Natural killer cell (primary cell): ENCODE measurements at regions of chr17 and their contacts with region 1.

Region 1: GRCh38 chr17:68179926-68180285 is 67.9 kb upstream of the AMZ2 start:
- DNase-seq: no peak
- ATAC-seq: no peak
- H3K4me3 ChIP-seq: no peak overlapping the region
- H3K4me3 Mint-ChIP-seq: no peak overlapping the region
- H3K27ac ChIP-seq: peak overlapping the region; percentile 75
- H3K27ac Mint-ChIP-seq: peak overlapping the region; percentile 95 to 97
- H3K4me1 ChIP-seq: peaks cover 56% of the 10 kb centered on the region
- H3K4me1 Mint-ChIP-seq: peaks cover 28 to 44% of the 10 kb centered on the region in 2 donors
- H3K27me3 ChIP-seq: no peaks in the 10 kb centered on the region
- H3K27me3 Mint-ChIP-seq: no peaks in the 10 kb centered on the region
- CTCF ChIP-seq: no peak

Region 2: GRCh38 chr17:68101075-68101992 is 78.6 kb before region 1 on chr17:
- intact Hi-C with region 1: no loop called
- DNase-seq: peak; percentile 73 to 80
- ATAC-seq: peak; percentile 81 to 95 (median 89)
- H3K4me3 ChIP-seq: peak overlapping the region; percentile 83
- H3K4me3 Mint-ChIP-seq: peak overlapping the region; percentile 94
- H3K27ac ChIP-seq: peak overlapping the region; percentile 90
- H3K27ac Mint-ChIP-seq: peak overlapping the region; percentile 90 to 94
- H3K4me1 ChIP-seq: peaks cover 14% of the 10 kb centered on the region
- H3K4me1 Mint-ChIP-seq: peaks cover 36 to 42% of the 10 kb centered on the region in 2 donors
- H3K27me3 ChIP-seq: no peaks in the 10 kb centered on the region
- H3K27me3 Mint-ChIP-seq: no peaks in the 10 kb centered on the region
- CTCF ChIP-seq: no peak

Region 3: DNA sequence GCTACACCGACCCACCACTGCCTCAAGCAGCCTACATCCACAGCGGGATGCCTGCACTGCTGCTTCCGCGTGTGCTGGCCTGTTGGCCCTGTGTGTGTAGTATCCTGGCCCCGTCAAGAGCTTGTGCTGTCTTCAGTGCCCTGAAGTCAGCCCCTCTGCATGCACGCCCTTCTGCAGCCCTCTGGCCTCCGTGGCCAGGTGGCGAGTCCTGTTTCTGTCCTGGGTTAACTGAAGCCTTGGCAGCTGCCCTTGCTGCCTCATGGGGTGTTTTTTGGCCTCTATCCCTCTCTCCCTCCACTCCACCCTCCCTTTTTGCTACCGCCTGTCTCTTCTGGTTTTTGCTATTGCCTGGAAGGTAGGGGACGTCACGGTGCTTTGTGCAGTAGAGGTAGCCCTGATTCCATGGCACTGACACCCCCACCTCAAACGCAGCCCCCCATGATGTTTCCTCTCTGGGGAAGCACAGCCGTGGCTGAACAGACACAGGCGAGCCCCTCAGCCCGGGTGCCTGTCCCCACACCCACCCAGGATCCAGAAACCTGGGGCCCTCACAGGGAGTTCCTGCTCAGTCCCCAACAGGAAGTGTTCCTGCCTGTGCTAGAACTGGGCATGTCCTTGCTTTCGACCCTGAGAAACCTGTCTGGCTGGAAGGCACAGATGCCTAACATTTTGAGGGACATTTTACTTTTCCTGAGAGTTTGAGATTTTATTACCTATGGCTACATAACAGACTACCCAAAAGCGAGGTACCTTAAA is 49.1 kb after region 1 on chr17:
- intact Hi-C with region 1: no loop called
- DNase-seq: no peak
- ATAC-seq: no peak
- H3K4me3 ChIP-seq: no peak overlapping the region
- H3K4me3 Mint-ChIP-seq: no peak overlapping the region
- H3K27ac ChIP-seq: no peak overlapping the region
- H3K27ac Mint-ChIP-seq: peak overlapping the region; percentile 79 to 100
- H3K4me1 ChIP-seq: peaks cover 47% of the 10 kb centered on the region
- H3K4me1 Mint-ChIP-seq: peaks cover 54 to 56% of the 10 kb centered on the region in 2 donors
- H3K27me3 ChIP-seq: no peaks in the 10 kb centered on the region
- H3K27me3 Mint-ChIP-seq: no peaks in the 10 kb centered on the region
- CTCF ChIP-seq: no peak

Region 4: DNA sequence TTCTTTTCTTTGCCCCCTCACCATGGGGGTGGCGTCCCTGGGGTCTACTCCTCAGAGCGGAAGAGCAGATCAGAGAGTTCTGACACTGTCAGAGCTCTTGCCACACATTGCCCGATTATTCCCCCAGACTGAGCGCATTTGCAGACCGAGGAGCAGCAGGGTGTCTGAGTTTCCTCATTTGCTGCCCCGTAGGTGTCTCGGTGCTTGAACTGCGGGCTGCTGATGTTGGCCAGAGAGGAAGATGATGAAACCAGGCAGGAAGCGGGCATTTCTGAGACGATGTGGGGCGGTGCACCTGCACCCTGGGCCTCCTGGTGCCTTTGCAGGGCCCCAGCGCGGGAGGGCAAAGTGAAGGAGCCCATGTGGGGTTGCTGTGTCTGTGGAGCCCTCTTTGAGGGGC is 166.5 kb after region 1 on chr17:
- intact Hi-C with region 1: loop called (anchors 2 kb)
- DNase-seq: peak; percentile 59 to 79
- ATAC-seq: peak; percentile 77 to 89 (median 81)
- H3K4me3 ChIP-seq: no peak overlapping the region
- H3K4me3 Mint-ChIP-seq: peak overlapping the region; percentile 88
- H3K27ac ChIP-seq: peak overlapping the region; percentile 81
- H3K27ac Mint-ChIP-seq: peak overlapping the region; percentile 96 to 98
- H3K4me1 ChIP-seq: peaks cover 72% of the 10 kb centered on the region
- H3K4me1 Mint-ChIP-seq: peaks cover 71 to 80% of the 10 kb centered on the region in 2 donors
- H3K27me3 ChIP-seq: no peaks in the 10 kb centered on the region
- H3K27me3 Mint-ChIP-seq: no peaks in the 10 kb centered on the region
- CTCF ChIP-seq: no peak